ENCODE measurements at regions of chr18 and their contacts with region 1.

Region 1: GRCh38 chr18:26617151-26617554 is 68.8 kb upstream of the KCTD1 start:
- DNase-seq: no peak
- H3K4me3 ChIP-seq: no peak overlapping the region
- H3K27ac ChIP-seq: no peak overlapping the region
- H3K4me1 ChIP-seq: peaks cover 0 to 7% (median 0%) of the 10 kb centered on the region in 6 donors
- H3K27me3 ChIP-seq: no peaks in the 10 kb centered on the region
- CTCF ChIP-seq: no peak
- POLR2A ChIP-seq: no peak

Region 2: GRCh38 chr18:27605107-27605834 is 988.1 kb after region 1 on chr18:
- intact Hi-C with region 1: loop called (anchors 10 kb)
- DNase-seq: no peak
- H3K4me3 ChIP-seq: no peak overlapping the region
- H3K27ac ChIP-seq: no peak overlapping the region
- H3K4me1 ChIP-seq: no peaks in the 10 kb centered on the region
- H3K27me3 ChIP-seq: no peaks in the 10 kb centered on the region
- CTCF ChIP-seq: peak in 10 of 11 experiments; percentile 8 to 76 (median 62)
- POLR2A ChIP-seq: no peak